ENCODE measurements at regions of chr10 and their contacts with region 1.

Region 1: DNA sequence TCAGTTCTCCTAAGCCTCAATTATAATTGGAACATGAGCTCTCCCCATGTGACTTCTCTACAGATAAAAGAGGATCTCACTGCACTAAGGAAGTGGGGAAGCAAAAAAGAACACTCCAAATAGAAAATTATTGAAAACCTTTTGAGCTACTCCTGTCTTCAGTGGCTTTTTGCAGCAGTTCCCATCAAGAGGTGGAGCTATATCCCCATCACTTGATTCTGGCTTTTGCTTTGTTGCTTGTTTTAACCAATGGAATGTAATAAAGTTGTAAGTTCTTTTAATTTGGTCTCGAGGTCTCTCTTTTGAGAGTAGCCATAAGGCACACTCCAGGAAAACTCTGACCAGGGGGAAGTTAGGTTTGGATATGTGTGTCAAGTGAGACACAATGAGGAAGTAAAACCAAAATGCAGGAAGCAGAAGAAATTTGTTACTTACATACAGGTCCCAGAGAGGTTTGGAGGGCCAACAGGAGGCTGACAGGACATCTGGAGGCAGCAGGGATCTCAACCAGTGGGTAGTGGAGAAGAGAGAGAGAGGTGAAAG is 569.4 kb downstream of the HTR7 start:
- DNase-seq: no peak
- ATAC-seq: no peak
- H3K4me3 ChIP-seq: no peak overlapping the region
- H3K27ac ChIP-seq: no peak overlapping the region
- H3K4me1 ChIP-seq: no peaks in the 10 kb centered on the region
- CTCF ChIP-seq: no peak
- EP300 ChIP-seq: no peak
- POLR2A ChIP-seq: no peak
- RAD21 ChIP-seq: peak; percentile 39 to 40; a peak in 2 of 5 replicates

Region 2: GRCh38 chr10:90787393-90788198 is 499.1 kb after region 1 on chr10:
- CTCF ChIA-PET with region 1: interaction called, 11 read pairs
- POLR2A ChIA-PET with region 1: no interaction called
- DNase-seq: peak; percentile 22 to 42
- ATAC-seq: peak; percentile 74 to 92; a peak in 5 of 6 replicates
- H3K4me3 ChIP-seq: no peak overlapping the region
- H3K27ac ChIP-seq: no peak overlapping the region
- H3K4me1 ChIP-seq: no peaks in the 10 kb centered on the region
- CTCF ChIP-seq: peak; percentile 71
- EP300 ChIP-seq: no peak
- POLR2A ChIP-seq: no peak
- RAD21 ChIP-seq: peak; percentile 65 to 72

Measured in A549 (cell line).